Right ventricle myocardium inferior (tissue), 1 donor: ENCODE measurements at regions of chr15 and their contacts with region 1.

Region 1: DNA sequence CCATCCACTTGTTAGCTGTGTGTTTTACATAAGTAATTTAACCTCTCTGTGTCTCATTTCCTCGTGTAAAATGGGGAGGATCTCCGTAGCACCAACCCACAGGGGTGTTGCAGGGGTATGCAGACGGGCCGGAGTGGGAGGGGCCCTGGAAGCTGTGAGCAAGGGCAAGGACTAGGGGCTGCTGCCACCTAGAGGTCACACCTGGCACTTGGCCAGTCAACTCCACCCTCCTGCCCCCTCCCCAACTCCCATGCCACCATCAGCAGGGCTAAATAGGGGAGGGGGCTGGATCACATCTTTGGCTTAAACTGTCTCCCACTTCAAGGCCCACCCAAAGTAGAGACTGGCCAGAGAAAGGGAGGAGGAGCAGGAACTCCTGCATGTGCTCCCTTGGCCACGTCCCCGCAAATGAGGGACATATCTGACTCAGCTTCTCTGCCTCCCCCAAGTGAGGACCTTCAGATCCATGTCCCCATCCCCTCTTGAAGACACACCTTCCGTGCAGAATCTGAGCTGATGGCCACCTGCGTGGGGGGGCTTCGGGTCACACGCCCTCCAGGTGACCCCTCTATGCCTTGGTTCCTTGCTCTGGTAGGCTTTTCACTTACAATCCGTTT is 2.6 kb downstream of the CCDC9B start:
- DNase-seq: peak; percentile 89
- ATAC-seq: no peak

Region 2: DNA sequence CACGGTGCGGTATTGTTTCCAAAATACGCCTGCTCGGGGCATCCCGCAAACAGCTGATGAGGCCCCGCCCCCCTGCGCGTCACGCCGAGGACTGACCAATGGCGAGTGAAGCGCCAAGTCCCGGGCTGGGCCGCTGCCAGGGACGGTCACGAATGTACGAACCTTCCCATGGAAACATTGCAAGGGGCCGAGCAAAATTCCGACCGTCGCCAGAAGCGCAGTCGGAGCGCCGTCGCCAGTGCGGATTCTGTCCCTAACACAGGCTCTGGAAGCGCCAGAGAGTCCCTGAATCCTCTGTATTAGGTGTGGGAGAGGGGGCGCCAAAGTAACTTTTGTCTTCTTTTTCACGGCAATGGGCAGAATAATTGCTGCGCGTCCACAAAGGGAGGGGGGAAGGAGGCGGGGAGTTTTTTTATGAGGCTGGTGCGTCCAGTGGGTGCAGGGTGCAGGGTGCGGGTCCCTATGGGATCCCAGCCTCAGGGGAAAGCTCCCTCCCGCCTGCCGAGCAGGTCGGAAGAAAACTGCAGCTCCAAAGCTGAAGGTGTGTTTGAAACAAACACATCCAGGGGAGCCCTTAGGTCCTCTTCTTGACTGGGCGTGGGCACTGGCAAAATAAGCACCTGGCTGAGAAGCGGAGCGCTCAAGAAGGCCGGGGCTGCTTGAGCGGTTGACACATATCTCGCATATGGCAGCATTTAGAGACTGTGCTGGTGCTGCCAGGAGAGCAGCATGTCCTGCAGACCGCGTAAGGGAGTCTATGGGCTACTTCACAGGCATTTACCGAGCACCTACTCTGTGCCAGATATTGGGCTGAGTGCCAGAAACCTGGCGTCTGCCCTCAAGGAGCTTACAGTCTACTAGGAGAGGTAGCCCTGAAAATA is 229.1 kb before region 1 on chr15 and contains the start of gene BMF:
- intact Hi-C with region 1: loop called (anchors 10 kb)
- DNase-seq: peak; percentile 100
- ATAC-seq: peak; percentile 80
- total RNA-seq, gene BMF: 3.2 TPM

Region 3: GRCh38 chr15:40323239-40323952 is 14.8 kb before region 1 on chr15 and contains the start of gene INAFM2:
- intact Hi-C with region 1: loop called (anchors 1 kb)
- DNase-seq: peak; percentile 94
- ATAC-seq: peak; percentile 91
- total RNA-seq, gene INAFM2: 55.6 TPM

Region 4: GRCh38 chr15:40421246-40422157 is 83.4 kb after region 1 on chr15:
- intact Hi-C with region 1: loop called (anchors 2 kb)
- DNase-seq: peak; percentile 93
- ATAC-seq: peak; percentile 92